A673 (cell line): ENCODE measurements at regions of chrX and their contacts with region 1.

Region 1: DNA sequence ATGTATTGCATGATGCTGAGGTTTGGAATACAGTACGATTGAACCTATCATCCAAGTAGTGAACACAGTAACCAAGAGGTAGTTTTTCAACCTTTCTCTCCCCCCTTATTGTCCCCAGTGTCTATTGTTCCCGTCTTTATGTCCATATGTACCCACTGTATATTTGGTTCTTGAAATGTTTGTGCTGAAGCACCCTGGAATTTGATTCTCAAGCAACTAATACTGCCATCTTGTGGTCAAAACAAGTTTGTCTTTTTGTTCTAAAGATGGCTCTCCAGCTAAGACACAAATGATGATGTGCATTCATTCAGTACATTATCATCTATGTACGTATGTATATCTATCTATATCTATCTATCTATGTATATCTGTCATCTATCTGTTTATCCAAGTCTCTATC is 33.5 kb upstream of the DCX start:
- DNase-seq: peak; percentile 56
- H3K4me3 ChIP-seq: no peak overlapping the region
- H3K27ac ChIP-seq: no peak overlapping the region
- H3K4me1 ChIP-seq: no peaks in the 10 kb centered on the region
- H3K27me3 ChIP-seq: peaks cover 21% of the 10 kb centered on the region
- CTCF ChIP-seq: peak; percentile 64

Region 2: DNA sequence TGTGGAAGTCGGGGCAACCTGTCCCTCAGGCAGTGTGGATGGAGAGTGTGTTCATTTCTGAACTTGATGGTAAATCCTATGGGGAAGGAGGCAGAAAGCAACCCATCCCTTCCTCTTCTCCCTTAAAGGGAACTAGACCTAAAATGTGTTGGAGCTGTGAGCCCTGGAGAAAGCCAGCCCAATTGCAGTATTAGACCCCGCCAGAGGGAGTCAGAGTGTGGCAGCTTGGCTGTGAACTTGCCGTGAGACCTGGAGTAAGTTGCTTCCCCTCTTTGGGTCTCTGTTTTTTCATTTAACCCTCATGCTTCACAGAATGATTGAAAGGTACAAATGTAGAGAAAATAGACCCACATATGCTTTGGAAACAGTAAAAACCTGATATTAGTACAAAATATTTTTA is 458.2 kb before region 1 on chrX:
- CTCF ChIA-PET with region 1: no interaction called
- POLR2A ChIA-PET with region 1: no interaction called
- intact Hi-C with region 1: no loop called
- DNase-seq: no peak
- H3K4me3 ChIP-seq: no peak overlapping the region
- H3K27ac ChIP-seq: no peak overlapping the region
- H3K4me1 ChIP-seq: no peaks in the 10 kb centered on the region
- H3K27me3 ChIP-seq: peaks cover 24% of the 10 kb centered on the region
- CTCF ChIP-seq: 0 out of 2 replicates have a peak, but pooled peaks have one; percentile 20

Region 3: GRCh38 chrX:111168314-111168713 is 277.2 kb before region 1 on chrX:
- CTCF ChIA-PET with region 1: interaction called, 5 read pairs
- POLR2A ChIA-PET with region 1: no interaction called
- intact Hi-C with region 1: loop called (anchors 1 kb)
- DNase-seq: peak; percentile 45
- H3K4me3 ChIP-seq: no peak overlapping the region
- H3K27ac ChIP-seq: no peak overlapping the region
- H3K4me1 ChIP-seq: no peaks in the 10 kb centered on the region
- H3K27me3 ChIP-seq: peaks cover 3% of the 10 kb centered on the region
- CTCF ChIP-seq: peak; percentile 54

Region 4: GRCh38 chrX:111262096-111262495 is 183.4 kb before region 1 on chrX:
- CTCF ChIA-PET with region 1: no interaction called
- POLR2A ChIA-PET with region 1: no interaction called
- intact Hi-C with region 1: loop called (anchors 10 kb)
- DNase-seq: no peak
- H3K4me3 ChIP-seq: no peak overlapping the region
- H3K27ac ChIP-seq: no peak overlapping the region
- H3K4me1 ChIP-seq: no peaks in the 10 kb centered on the region
- H3K27me3 ChIP-seq: peaks cover 8% of the 10 kb centered on the region
- CTCF ChIP-seq: no peak